ENCODE measurements at regions of chr6 and their contacts with region 1.

Region 1: DNA sequence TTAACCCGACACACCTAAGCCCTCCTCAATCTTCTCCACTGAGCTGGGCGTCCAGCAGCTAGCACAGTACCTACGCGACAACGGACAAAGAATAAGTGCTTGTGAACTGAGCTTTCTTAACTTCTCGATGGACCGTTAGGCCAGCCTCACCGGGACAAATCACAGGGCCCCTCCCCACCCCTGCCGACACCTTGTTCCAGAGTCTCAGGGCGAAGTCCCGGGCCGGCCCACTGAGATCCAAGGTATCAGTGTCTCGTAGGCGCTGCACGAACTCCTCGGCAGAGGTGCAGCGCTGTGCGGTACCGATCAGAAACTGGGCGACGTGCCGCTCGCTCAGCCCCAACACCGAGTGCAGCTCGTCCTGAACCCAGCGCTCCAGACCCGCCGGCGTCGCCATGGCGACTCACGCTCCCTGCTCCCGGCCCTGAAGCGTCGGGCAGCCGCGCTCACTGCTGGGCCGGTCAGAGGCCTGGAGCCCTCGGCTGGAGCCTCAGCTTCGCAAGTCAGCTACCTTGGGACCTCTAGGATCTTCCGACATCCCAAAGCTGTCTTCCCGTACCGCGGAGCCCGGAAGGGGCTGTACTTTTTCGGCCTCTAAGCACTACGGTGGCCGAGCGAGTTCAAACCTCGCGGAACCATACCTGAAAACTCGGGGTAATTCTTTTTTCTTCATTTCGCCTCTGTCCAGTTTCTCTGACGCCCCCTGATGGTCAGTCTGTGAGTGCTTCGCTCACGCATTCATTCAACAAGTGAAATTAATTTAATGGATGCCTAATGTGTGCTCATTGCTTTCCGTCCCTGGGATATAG is at the start of gene DHX16:
- DNase-seq: peak; percentile 76 to 94 (median 86)
- ATAC-seq: peak; percentile 80 to 85
- H3K4me3 Mint-ChIP-seq: peak within 1 kb of the TSS; percentile 76 to 95 (median 90)
- H3K27ac Mint-ChIP-seq: peak within 1 kb of the TSS; percentile 74 to 96 (median 90)
- H3K4me1 Mint-ChIP-seq: peaks cover 23 to 46% (median 41%) of the 10 kb centered on the region in 4 donors
- H3K27me3 Mint-ChIP-seq: no peaks in the 10 kb centered on the region
- polyA plus RNA-seq, gene DHX16: 17.7 to 31.2 (median 18.7) TPM

Region 2: DNA sequence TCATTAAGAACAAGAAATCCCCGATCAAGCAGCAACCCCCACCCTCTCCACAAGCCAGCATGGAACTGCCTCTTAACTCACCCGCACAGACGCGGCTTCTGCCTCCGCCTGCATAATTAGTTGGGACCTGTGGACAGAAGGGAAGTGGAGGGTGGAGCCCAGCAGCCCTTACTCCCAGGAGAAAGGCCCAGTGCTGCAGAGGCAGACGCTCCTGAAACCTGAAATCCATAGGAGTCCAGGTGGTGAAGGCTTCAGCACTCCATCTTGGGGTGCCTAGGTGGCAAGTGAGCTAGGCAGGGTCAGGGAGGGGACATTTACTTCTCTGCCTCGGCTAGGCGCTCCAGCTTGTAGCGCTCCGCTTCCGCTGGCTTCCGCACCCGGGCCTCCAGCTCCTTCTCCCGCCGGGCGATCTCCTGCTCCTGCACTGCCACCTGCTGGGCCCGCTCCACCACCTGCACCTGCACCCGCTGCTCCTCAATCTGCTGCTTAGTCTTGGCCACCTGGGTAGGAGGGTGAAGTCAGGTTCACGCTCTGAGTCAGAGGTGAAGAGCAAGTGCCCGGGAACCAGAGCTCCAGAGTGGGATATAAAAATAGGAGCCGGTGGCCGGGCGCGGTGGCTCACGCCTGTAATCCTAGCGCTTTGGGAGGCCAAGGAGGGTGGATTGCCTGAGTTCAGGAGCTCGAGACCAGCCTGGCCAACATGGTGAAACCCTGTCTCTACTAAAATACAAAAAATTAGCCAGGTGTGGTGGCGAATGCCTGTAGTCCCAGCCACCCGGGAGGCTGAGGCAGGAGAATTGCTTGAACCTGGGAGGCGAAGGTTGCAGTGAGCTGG is 58.2 kb after region 1 on chr6:
- POLR2A ChIA-PET with region 1: interaction called, 15 read pairs
- DNase-seq: peak; percentile 66 to 90 (median 80)
- ATAC-seq: peak; percentile 98 to 99
- H3K4me3 Mint-ChIP-seq: peak overlapping the region; percentile 14 to 77 (median 51)
- H3K27ac Mint-ChIP-seq: peak overlapping the region; percentile 47 to 81 (median 70)
- H3K4me1 Mint-ChIP-seq: peaks cover 21 to 47% (median 31%) of the 10 kb centered on the region in 4 donors
- H3K27me3 Mint-ChIP-seq: no peaks in the 10 kb centered on the region

Measured in naive thymus-derived CD8-positive, alpha-beta T cell (primary cell).